ENCODE measurements at regions of chr11 and their contacts with region 1.

Region 1: DNA sequence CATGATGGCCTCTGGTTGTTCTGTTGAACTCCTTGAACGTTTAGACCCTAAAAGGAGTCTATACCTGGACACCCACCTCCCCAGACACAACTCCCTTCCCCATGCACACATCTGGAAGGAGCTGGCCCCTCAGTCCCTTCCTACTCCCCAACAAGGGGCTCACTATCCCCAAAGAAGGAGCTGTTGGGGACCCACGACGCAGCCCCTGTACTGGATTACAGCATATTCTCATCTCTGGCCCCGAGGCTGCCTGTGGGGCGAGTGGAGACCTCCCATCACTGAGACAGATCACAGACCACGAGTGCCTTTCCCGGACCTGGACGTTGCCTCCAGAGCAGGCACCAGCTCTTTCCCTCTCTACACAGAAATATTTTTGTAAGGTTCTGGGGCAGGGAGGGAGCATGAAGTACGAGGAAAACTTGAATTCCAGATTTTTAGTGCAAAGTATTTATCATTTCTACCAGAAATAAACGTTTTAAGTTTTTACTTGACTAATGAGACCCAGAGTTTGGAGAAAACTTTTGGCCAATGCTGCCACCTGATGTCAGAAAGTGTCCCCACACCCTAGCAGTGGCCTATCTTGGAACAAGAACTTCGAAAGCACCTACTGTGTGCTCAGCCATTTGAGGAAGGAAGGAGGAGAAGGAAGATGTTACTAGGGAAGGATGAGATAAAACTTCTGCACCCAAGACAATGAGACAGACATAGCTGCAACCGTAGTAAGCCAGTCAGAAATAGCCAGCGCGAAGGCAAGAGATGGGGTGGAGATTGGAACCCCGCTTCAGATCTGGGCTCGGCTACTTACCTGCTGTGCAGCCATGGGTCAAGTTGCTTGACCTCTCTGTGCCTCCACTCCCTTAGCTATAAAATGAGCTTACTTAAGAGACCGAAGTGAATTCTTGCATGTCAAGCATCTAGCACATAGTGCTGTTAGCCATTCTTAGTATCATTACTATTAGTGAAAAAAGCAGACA is 10.2 kb upstream of the POU2F3 start:
- DNase-seq: peak; percentile 64
- ATAC-seq: peak; percentile 45
- H3K4me3 ChIP-seq: no peak overlapping the region
- H3K27ac ChIP-seq: no peak overlapping the region
- H3K4me1 ChIP-seq: no peaks in the 10 kb centered on the region
- H3K27me3 ChIP-seq: no peaks in the 10 kb centered on the region
- CTCF ChIP-seq: peak; percentile 87

Region 2: DNA sequence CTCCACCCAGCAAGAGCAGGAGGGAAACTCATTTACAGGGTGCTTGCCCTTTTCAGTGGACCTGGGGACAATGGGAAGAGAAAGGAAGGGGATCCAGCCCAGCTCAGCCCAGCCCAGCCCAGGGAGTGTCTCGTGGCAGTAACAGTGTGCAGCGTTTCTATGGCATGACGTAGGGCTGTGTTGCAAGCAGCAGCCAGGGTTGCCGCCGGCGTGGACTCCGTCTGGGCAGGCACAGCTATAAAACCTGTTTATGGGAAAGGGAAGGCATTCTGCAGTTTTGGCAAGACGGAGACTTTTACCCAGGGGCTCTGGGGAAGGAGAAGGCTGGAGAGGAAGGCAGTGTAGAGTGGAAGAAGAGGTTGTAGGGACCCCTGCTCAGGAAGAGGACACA is 101.0 kb before region 1 on chr11:
- CTCF ChIA-PET with region 1: no interaction called
- POLR2A ChIA-PET with region 1: no interaction called
- intact Hi-C with region 1: no loop called
- DNase-seq: peak; percentile 90
- ATAC-seq: peak; percentile 91
- H3K4me3 ChIP-seq: peak overlapping the region; percentile 23; the same call in 1 of the 2 replicates
- H3K27ac ChIP-seq: peak overlapping the region; percentile 90
- H3K4me1 ChIP-seq: peaks cover 35% of the 10 kb centered on the region
- H3K27me3 ChIP-seq: no peaks in the 10 kb centered on the region
- CTCF ChIP-seq: no peak

Region 3: DNA sequence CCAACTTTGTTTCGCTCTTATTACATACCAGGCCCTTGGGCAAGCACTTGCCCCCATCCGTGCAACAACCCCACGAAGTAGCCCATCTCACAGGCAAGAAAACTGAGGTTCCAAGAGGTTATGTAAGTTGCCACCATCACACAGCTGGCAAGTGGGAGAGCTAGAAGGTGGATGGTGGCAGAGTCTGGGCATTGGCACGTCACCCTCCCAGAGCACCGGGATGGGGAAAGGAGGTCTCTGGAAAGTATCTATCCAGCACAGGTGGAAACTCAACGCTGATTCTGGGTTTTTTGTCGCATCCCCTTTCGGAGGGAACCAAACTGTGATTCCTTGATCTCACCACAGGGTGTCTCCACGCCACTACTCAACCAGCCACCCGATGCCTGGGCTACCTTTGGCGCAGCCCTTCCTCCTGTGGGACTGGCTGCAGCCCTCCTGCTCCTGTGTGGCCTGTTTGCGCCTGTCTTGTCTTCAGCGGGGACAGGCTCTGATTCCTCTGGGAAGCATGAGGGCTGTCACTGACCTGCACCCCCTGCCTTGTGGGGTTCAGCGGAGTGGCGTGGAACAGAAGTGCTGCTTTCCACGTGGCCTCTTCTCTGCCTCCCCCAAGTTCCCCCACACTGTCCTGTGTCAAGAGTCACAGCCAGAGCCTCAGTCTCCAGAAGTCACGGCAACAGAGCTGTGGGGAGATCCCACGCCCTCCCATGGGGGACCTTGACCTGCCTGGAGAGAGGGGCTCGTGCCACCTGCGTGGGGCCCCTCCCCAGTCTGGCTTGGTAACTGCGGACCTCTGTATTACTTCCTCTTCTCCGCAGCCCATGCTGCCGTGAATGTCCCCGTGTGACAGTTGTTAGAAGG is 57.5 kb before region 1 on chr11:
- CTCF ChIA-PET with region 1: no interaction called
- POLR2A ChIA-PET with region 1: no interaction called
- intact Hi-C with region 1: loop called (anchors 1 kb)
- DNase-seq: peak; percentile 81
- ATAC-seq: peak; percentile 78
- H3K4me3 ChIP-seq: no peak overlapping the region
- H3K27ac ChIP-seq: no peak overlapping the region
- H3K4me1 ChIP-seq: peaks cover 8% of the 10 kb centered on the region
- H3K27me3 ChIP-seq: peaks cover 39% of the 10 kb centered on the region
- CTCF ChIP-seq: peak; percentile 91

Measured in PC-3 (cell line).